CD4-positive, alpha-beta memory T cell (primary cell): ENCODE measurements at regions of chr1 and their contacts with region 1.

Region 1: GRCh38 chr1:44792783-44793714 is 5.1 kb upstream of the BEST4 start:
- DNase-seq: no peak
- H3K4me3 ChIP-seq: no peak overlapping the region
- H3K4me3 Mint-ChIP-seq: no peak overlapping the region
- H3K27ac ChIP-seq: no peak overlapping the region
- H3K27ac Mint-ChIP-seq: peak overlapping the region in 3 of 7 donors; percentile 44 to 91 (median 79)
- H3K4me1 ChIP-seq: no peaks in the 10 kb centered on the region
- H3K4me1 Mint-ChIP-seq: peaks cover 0 to 5% (median 2%) of the 10 kb centered on the region in 4 donors
- H3K27me3 ChIP-seq: no peaks in the 10 kb centered on the region
- H3K27me3 Mint-ChIP-seq: no peaks in the 10 kb centered on the region

Region 2: DNA sequence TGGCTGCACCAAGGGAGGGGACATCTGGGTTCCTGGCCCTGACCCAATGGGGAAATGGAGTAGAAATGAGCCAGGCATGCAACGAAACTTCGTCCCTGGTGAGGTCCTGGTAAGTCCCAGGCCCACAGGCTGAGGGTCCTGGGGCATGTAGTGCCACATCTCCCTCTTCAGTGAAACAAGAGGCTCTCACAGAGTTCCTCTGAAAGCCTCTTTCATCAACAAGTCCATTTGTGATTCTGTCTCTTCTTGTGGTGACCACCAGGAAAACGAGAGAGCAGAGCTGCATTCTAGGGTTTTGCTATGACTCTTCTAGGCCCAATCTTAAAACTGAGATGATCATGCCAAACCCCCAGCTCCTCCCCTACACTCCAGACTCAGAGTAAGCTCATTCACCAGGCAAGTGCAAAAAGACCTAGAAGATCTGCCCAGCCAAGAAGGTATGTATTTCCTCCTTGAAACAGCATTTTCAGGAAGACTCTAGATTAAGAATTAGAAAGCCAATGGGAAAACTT is 412.3 kb before region 1 on chr1:
- CTCF ChIA-PET with region 1: no interaction called
- POLR2A ChIA-PET with region 1: no interaction called
- intact Hi-C with region 1: no loop called
- DNase-seq: no peak
- H3K4me3 ChIP-seq: no peak overlapping the region
- H3K4me3 Mint-ChIP-seq: no peak overlapping the region
- H3K27ac ChIP-seq: no peak overlapping the region
- H3K27ac Mint-ChIP-seq: no peak overlapping the region
- H3K4me1 ChIP-seq: no peaks in the 10 kb centered on the region
- H3K4me1 Mint-ChIP-seq: no peaks in the 10 kb centered on the region
- H3K27me3 ChIP-seq: no peaks in the 10 kb centered on the region
- H3K27me3 Mint-ChIP-seq: peaks cover 0 to 9% of the 10 kb centered on the region in 2 donors

Region 3: GRCh38 chr1:44587796-44588460 is 205.1 kb before region 1 on chr1:
- CTCF ChIA-PET with region 1: no interaction called
- POLR2A ChIA-PET with region 1: no interaction called
- intact Hi-C with region 1: no loop called
- DNase-seq: no peak
- H3K4me3 ChIP-seq: no peak overlapping the region
- H3K4me3 Mint-ChIP-seq: no peak overlapping the region
- H3K27ac ChIP-seq: no peak overlapping the region
- H3K27ac Mint-ChIP-seq: no peak overlapping the region
- H3K4me1 ChIP-seq: no peaks in the 10 kb centered on the region
- H3K4me1 Mint-ChIP-seq: no peaks in the 10 kb centered on the region
- H3K27me3 ChIP-seq: no peaks in the 10 kb centered on the region
- H3K27me3 Mint-ChIP-seq: peaks cover 6 to 8% of the 10 kb centered on the region in 2 donors

Region 4: GRCh38 chr1:44684525-44684924 is 108.5 kb before region 1 on chr1:
- CTCF ChIA-PET with region 1: no interaction called
- POLR2A ChIA-PET with region 1: no interaction called
- intact Hi-C with region 1: no loop called
- DNase-seq: no peak
- H3K4me3 ChIP-seq: no peak overlapping the region
- H3K4me3 Mint-ChIP-seq: no peak overlapping the region
- H3K27ac ChIP-seq: no peak overlapping the region
- H3K27ac Mint-ChIP-seq: no peak overlapping the region
- H3K4me1 ChIP-seq: no peaks in the 10 kb centered on the region
- H3K4me1 Mint-ChIP-seq: no peaks in the 10 kb centered on the region
- H3K27me3 ChIP-seq: no peaks in the 10 kb centered on the region
- H3K27me3 Mint-ChIP-seq: no peaks in the 10 kb centered on the region

Region 5: DNA sequence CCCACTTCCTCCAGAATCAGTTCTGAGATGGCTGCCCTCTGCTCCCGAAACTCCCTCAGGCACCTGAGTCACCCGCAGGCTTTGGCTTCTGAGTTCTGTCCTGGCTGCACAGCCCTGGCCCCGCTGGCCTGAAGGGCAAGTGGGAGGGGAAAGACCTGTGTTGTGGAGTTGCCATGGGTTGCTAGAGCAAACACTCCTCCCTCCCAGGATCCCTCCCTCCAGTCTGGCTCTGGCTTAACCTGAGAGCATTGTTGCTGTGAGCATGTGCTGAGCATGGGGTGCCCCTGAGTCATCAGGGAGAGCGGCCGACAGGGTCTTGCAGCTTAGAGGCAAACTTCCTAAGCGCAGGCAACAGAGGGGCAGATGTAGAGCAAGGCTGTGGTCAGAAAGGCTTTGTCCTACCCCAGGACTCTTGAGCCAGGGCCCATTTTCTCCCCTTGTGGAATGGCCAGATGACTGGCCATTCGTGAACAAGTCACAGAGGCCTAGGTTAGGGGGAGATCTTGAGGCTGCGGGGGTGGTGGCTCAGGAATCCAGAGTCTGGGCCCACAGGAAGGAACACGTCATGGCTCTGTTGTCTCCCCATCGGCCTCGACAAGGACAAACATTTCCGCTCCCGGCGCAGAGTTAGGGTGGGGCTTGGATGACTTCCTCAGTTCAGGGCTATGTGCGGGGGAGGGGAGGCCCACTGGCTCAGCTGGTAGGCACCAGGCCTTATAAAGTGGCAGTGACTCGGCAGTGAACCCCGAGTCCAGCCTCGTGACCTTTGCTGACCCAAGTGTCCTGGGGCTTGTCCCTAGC is 14.4 kb after region 1 on chr1 and contains the start of gene DYNLT4:
- CTCF ChIA-PET with region 1: interaction called, 63 read pairs
- POLR2A ChIA-PET with region 1: interaction called, 1,564 read pairs
- intact Hi-C with region 1: no loop called
- DNase-seq: peak; percentile 91 to 98 (median 91)
- H3K4me3 ChIP-seq: peak within 1 kb of the TSS; percentile 41 to 57
- H3K4me3 Mint-ChIP-seq: peak within 1 kb of the TSS; percentile 74 to 87 (median 80)
- H3K27ac ChIP-seq: peak within 1 kb of the TSS; percentile 98
- H3K27ac Mint-ChIP-seq: peak within 1 kb of the TSS; percentile 98 to 100 (median 99)
- H3K4me1 ChIP-seq: peaks cover 91% of the 10 kb centered on the region
- H3K4me1 Mint-ChIP-seq: peaks cover 57 to 94% (median 73%) of the 10 kb centered on the region in 4 donors
- H3K27me3 ChIP-seq: no peaks in the 10 kb centered on the region
- H3K27me3 Mint-ChIP-seq: no peaks in the 10 kb centered on the region
- total RNA-seq, gene DYNLT4: 0.47 TPM in 1 of 2 experiments, not detected in the other

Region 6: GRCh38 chr1:44835738-44836675 is 43.0 kb after region 1 on chr1:
- CTCF ChIA-PET with region 1: interaction called, 14 read pairs
- POLR2A ChIA-PET with region 1: interaction called, 3 read pairs
- intact Hi-C with region 1: loop called (anchors 2 kb)
- DNase-seq: peak; percentile 71 to 83 (median 75)
- H3K4me3 ChIP-seq: no peak overlapping the region
- H3K4me3 Mint-ChIP-seq: peak overlapping the region in 4 of 8 donors; percentile 19 to 69 (median 42)
- H3K27ac ChIP-seq: no peak overlapping the region
- H3K27ac Mint-ChIP-seq: peak overlapping the region in 6 of 7 donors; percentile 7 to 74 (median 58)
- H3K4me1 ChIP-seq: peaks cover 4% of the 10 kb centered on the region
- H3K4me1 Mint-ChIP-seq: peaks cover 5 to 9% (median 8%) of the 10 kb centered on the region in 4 donors
- H3K27me3 ChIP-seq: no peaks in the 10 kb centered on the region
- H3K27me3 Mint-ChIP-seq: peaks cover 5 to 10% of the 10 kb centered on the region in 2 donors